ENCODE measurements at regions of chr1 and their contacts with region 1.

Region 1: GRCh38 chr1:157156058-157156541 is 17.9 kb upstream of the ETV3 start:
- DNase-seq: peak; percentile 83
- ATAC-seq: peak; percentile 88
- H3K4me3 ChIP-seq: no peak overlapping the region
- H3K4me3 Mint-ChIP-seq: peak overlapping the region; percentile 38
- H3K27ac ChIP-seq: no peak overlapping the region
- H3K27ac Mint-ChIP-seq: peak overlapping the region; percentile 51
- H3K4me1 ChIP-seq: peaks cover 3 to 11% of the 10 kb centered on the region in 2 donors
- H3K4me1 Mint-ChIP-seq: peaks cover 4% of the 10 kb centered on the region
- H3K27me3 ChIP-seq: peaks cover 0 to 31% (median 12%) of the 10 kb centered on the region in 4 experiments
- H3K27me3 Mint-ChIP-seq: peaks cover 43% of the 10 kb centered on the region
- CTCF ChIP-seq: peak; percentile 97

Region 2: DNA sequence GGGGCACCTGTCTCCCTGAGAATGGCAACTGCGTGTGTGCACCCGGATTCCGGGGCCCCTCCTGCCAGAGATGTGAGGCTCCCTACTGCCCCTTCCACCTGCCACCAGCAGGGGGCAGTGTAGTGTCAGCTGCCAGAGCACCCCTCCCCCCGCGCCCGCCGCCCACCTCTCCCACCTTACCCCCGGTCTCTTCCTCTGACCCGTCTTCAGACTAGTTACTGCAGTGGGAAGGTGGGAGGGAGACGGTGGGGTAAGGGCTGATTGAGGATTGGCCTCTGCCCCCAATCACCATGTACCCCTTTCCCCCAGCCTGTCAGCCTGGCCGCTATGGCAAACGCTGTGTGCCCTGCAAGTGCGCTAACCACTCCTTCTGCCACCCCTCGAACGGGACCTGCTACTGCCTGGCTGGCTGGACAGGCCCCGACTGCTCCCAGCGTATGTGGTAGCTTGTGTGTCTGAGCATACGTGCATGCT is 245.8 kb before region 1 on chr1:
- CTCF ChIA-PET with region 1: no interaction called
- POLR2A ChIA-PET with region 1: no interaction called
- intact Hi-C with region 1: loop called (anchors 5 kb)
- DNase-seq: peak; percentile 58
- ATAC-seq: peak; percentile 41
- H3K4me3 ChIP-seq: no peak overlapping the region
- H3K4me3 Mint-ChIP-seq: no peak overlapping the region
- H3K27ac ChIP-seq: no peak overlapping the region
- H3K27ac Mint-ChIP-seq: no peak overlapping the region
- H3K4me1 ChIP-seq: no peaks in the 10 kb centered on the region
- H3K4me1 Mint-ChIP-seq: peaks cover 2% of the 10 kb centered on the region
- H3K27me3 ChIP-seq: peaks cover 0 to 21% (median 3%) of the 10 kb centered on the region in 4 experiments
- H3K27me3 Mint-ChIP-seq: peaks cover 39% of the 10 kb centered on the region
- CTCF ChIP-seq: peak; percentile 75

Region 3: DNA sequence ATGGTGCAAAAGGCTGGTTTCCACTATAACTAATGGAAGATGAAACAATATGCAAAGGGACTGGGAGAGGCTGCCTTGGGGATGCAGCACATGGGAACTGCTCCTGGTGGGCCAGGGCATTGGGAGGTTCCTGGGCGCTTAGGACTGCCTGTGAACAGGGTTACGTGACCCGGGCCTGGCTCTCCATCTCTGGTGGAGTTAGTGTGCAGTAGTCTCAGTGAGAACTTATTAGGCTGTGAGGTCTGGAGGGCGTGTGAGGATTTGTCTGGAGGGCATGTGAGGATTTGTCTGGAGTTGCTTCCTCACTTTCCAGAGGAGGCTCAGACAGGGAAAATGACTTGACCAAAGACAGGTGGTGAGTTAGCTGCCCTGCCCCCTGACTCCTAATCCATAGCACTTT is 55.0 kb before region 1 on chr1:
- CTCF ChIA-PET with region 1: interaction called, 29 read pairs
- POLR2A ChIA-PET with region 1: no interaction called
- intact Hi-C with region 1: no loop called
- DNase-seq: no peak
- ATAC-seq: no peak
- H3K4me3 ChIP-seq: no peak overlapping the region
- H3K4me3 Mint-ChIP-seq: no peak overlapping the region
- H3K27ac ChIP-seq: no peak overlapping the region
- H3K27ac Mint-ChIP-seq: no peak overlapping the region
- H3K4me1 ChIP-seq: no peaks in the 10 kb centered on the region
- H3K4me1 Mint-ChIP-seq: no peaks in the 10 kb centered on the region
- H3K27me3 ChIP-seq: no peaks in the 10 kb centered on the region
- H3K27me3 Mint-ChIP-seq: peaks cover 26% of the 10 kb centered on the region
- CTCF ChIP-seq: no peak

Region 4: DNA sequence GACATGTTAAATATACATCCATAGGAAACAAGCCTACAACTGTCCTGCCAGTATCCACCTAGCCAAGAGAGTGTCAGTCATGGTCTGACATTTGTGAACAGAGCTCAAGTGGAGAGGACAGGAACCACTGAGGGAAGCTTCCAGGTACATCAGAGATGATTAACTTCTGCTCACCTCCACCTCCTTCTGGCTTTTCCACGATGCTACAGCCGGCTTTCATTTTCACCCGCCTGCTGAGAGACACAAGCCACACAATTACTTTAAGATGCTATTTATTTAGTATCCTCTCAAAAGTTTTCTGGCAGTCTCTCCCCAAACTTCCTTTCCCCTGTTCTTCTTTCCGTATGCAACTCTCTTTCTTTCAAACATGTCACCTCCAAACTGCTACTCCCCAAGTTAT is 20.0 kb before region 1 on chr1:
- CTCF ChIA-PET with region 1: interaction called, 24 read pairs
- POLR2A ChIA-PET with region 1: interaction called, 6 read pairs
- intact Hi-C with region 1: no loop called
- DNase-seq: no peak
- ATAC-seq: no peak
- H3K4me3 ChIP-seq: no peak overlapping the region
- H3K4me3 Mint-ChIP-seq: peak overlapping the region; percentile 30
- H3K27ac ChIP-seq: no peak overlapping the region
- H3K27ac Mint-ChIP-seq: peak overlapping the region; percentile 17
- H3K4me1 ChIP-seq: peaks cover 20 to 26% of the 10 kb centered on the region in 2 donors
- H3K4me1 Mint-ChIP-seq: peaks cover 42% of the 10 kb centered on the region
- H3K27me3 ChIP-seq: no peaks in the 10 kb centered on the region
- H3K27me3 Mint-ChIP-seq: no peaks in the 10 kb centered on the region
- CTCF ChIP-seq: no peak

Measured in B cell (primary cell).